ENCODE measurements at regions of chr3 and their contacts with region 1.

Region 1: DNA sequence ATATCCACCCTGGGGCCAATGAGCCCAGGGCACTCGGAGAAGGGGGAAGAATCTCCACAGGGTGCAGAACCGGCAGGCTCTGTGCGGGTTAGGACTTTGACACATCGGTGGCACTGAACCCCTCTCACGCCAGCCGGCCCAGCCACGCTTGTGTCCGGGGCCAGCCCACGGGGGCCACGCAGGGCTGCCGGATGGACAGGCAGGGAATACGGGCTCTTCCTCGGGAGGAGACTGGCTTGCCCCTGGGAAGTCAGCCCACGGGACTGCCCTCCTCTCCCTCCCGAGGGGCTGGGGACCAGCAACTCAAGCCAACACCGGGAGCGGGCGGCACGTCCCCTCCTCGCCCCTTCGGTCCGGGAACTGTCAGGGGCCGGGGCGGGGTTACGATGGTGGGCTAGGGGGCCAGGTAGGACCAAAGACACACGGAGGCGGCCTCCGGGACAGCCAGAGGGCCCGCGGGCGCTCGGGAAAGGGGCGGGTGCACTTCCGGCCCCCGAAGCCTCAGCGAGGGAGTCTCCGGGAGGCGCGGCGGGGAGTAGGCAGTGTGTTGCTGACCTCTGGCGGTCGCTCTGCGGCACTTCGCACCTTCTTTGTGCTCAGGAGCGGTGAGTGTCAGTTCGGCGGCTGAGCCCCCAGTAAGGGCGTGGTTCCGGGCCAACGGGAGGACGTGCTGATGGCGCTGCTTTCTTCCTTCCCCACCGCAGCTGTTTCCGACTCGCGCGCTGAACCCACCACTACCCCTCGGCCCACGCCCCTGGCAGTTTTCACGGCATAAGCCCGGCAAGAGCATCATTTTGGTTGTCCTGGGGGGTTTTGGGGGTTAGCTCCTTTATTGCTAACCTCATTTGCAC is 5.1 kb upstream of the CYP8B1 start:
- DNase-seq: no peak
- H3K4me3 ChIP-seq: peak overlapping the region; percentile 59 to 63
- H3K27ac ChIP-seq: peak overlapping the region; percentile 78
- H3K4me1 ChIP-seq: peaks cover 10% of the 10 kb centered on the region
- H3K27me3 ChIP-seq: no peaks in the 10 kb centered on the region
- CTCF ChIP-seq: peak; percentile 91 to 97 (median 94)
- POLR2A ChIP-seq: no peak

Region 2: DNA sequence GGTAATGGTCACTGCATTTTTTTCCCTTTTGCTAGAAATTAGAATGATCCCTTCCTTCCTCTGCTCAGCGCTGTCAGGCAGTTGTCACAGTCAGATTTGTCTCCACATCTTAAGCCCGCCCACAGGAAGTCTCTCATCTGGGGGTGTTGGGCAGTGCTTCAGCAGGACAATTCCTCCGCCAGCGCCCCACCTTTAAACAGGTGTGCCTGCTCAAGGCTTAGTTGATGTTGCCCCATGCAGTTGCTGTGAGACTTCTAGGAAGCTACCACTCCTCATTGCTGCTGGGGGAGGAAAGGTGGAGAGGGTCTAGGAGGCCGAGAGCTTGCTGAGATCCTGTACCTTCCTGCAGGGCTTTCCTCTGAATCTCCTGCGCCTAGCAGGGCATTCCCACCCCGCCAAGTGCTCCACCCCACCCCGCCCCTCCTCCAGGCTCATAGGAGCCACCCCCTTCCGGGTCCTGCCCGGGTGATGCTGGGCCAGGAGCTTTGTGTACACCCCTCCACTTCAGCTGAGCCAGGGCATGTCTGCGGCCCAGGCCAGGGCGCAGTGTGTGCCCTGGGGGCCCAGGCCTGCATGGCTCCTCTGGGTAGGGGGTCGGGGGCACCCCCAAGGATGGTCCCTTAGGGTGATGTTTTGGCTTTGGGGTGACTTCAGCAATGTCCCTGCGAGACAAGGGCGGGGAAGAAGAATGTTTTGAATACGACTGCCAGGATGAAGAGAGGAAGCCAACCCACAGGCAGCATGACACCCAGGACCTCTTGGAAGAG is 720.9 kb before region 1 on chr3:
- intact Hi-C with region 1: no loop called
- DNase-seq: no peak
- H3K4me3 ChIP-seq: peak overlapping the region; percentile 6 to 11
- H3K27ac ChIP-seq: no peak overlapping the region
- H3K4me1 ChIP-seq: peaks cover 36% of the 10 kb centered on the region
- H3K27me3 ChIP-seq: no peaks in the 10 kb centered on the region
- CTCF ChIP-seq: no peak
- POLR2A ChIP-seq: no peak

Region 3: DNA sequence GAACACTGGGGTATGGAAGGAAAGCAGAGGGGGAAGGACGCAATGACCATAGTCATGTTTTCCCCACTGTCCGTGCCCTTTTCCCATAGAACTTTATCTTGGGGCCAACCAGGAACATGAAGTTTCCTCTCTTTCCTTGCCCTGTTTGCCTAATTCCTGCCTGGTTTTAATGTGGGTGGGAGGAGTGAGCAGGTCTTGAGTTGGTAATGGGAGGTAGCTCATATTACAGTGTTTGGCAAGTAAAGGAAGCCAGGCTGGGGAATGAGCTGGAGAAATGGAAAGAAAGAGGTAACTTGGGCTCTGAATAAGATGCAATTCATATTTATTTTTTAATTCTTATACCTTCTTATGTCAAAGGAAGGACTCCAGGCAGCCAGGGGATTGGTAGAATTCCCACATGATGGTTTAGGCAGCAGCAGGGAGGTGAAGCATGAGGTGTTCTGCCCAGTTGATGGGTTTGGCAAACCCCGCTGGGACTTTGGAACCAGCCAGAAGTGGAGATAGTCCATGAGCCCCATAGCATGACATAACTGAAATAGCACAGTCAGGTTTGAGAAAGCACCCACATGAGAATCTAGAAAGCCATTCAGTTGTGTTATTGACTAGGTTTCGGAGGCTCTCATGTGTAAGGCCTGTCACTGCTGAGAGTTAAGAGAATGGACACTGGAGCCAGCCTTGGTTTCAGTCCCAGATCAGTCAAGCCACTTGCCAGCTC is 674.9 kb before region 1 on chr3:
- intact Hi-C with region 1: no loop called
- DNase-seq: no peak
- H3K4me3 ChIP-seq: no peak overlapping the region
- H3K27ac ChIP-seq: no peak overlapping the region
- H3K4me1 ChIP-seq: no peaks in the 10 kb centered on the region
- H3K27me3 ChIP-seq: no peaks in the 10 kb centered on the region
- CTCF ChIP-seq: no peak
- POLR2A ChIP-seq: no peak

Region 4: DNA sequence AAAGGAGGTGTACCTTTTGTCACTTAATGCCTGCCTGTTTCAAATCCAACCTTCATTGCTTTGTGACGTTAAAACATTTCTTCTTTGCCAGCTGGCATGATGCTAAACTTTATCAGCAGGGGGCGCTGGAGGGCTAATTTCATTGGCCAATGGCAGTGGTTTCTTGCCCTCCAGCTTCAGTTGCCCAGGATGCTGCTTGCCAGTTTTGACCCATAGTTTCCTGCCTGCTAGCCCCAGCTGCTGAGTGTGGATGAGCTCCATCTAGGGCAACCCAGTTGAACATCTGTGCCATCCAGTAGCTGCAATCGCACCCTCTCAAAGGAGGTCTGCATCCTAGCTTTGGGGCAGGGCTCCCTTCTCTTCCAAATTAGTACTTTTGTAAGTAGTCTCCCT is 49.5 kb before region 1 on chr3:
- intact Hi-C with region 1: loop called (anchors 5 kb)
- DNase-seq: no peak
- H3K4me3 ChIP-seq: no peak overlapping the region
- H3K27ac ChIP-seq: no peak overlapping the region
- H3K4me1 ChIP-seq: no peaks in the 10 kb centered on the region
- H3K27me3 ChIP-seq: no peaks in the 10 kb centered on the region
- CTCF ChIP-seq: peak; percentile 27 to 66 (median 63)
- POLR2A ChIP-seq: no peak

Measured in vagina (tissue), 2 donors.